PC-9 (cell line): ENCODE measurements at regions of chr15 and their contacts with region 1.

Region 1: GRCh38 chr15:40274350-40275274 is 8.3 kb downstream of the ANKRD63 start:
- DNase-seq: peak; percentile 55 to 83
- H3K4me3 ChIP-seq: no peak overlapping the region
- H3K27ac ChIP-seq: no peak overlapping the region
- H3K4me1 ChIP-seq: no peaks in the 10 kb centered on the region
- H3K27me3 ChIP-seq: no peaks in the 10 kb centered on the region
- CTCF ChIP-seq: peak; percentile 99

Region 2: DNA sequence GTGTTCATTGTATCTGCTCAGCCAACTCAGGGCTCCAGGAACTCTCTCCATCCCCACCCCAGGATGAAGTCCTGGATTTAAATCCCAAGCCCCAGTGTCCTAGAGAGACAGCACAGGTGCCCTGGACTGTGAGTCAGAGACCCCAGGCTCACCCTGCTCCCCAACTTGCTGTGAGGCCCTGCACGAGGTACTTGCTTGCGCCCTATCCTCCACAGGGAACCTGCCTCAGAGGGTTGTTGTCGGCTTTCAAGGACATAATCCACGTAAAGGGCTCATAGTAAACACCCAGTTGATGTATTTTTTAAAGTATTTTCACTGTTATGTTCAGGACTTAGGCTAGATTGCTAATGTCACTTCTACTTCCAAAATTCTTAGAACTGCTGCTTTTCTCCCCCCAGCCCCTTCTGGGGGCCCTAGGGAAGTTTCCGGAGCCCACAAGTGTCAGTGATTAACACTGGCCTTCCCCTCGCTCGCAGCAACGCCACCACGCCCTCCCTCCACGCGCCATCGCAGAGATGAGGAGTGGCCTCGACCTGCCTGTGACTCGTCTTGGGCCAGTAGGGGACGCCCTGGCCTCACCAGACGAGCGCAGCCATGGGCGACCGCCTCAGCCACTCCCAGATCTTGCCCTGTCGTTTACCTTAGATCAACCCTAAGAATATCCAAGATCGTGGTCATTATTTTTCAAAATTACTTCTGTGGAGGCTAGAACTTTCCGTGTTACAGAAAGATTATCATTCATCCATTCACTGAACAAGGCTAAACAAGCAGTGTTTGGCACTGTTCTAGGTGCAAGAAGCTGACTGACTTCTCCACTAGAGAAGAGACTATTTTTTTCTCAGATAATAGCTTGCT is 229.7 kb before region 1 on chr15:
- CTCF ChIA-PET with region 1: no interaction called
- POLR2A ChIA-PET with region 1: no interaction called
- intact Hi-C with region 1: loop called (anchors 1 kb)
- DNase-seq: peak; percentile 59 to 83
- H3K4me3 ChIP-seq: peak overlapping the region; percentile 51
- H3K27ac ChIP-seq: no peak overlapping the region
- H3K4me1 ChIP-seq: peaks cover 50% of the 10 kb centered on the region
- H3K27me3 ChIP-seq: no peaks in the 10 kb centered on the region
- CTCF ChIP-seq: peak; percentile 84

Region 3: GRCh38 chr15:40238532-40239403 is 35.8 kb before region 1 on chr15 and contains the start of gene PAK6:
- CTCF ChIA-PET with region 1: interaction called, 28 read pairs
- POLR2A ChIA-PET with region 1: interaction called, 3 read pairs
- intact Hi-C with region 1: no loop called
- DNase-seq: peak; percentile 77 to 94
- H3K4me3 ChIP-seq: peak within 1 kb of the TSS; percentile 48; the same call in 1 of the 2 replicates
- H3K27ac ChIP-seq: 0 out of 2 replicates have a peak within 1 kb of the TSS, but pooled peaks have one; percentile 19
- H3K4me1 ChIP-seq: peaks cover 51% of the 10 kb centered on the region
- H3K27me3 ChIP-seq: no peaks in the 10 kb centered on the region
- CTCF ChIP-seq: no peak
- total RNA-seq, gene PAK6: 10.7 and 11.7 TPM in 2 replicates

Region 4: GRCh38 chr15:40302981-40303380 is 28.4 kb after region 1 on chr15:
- CTCF ChIA-PET with region 1: no interaction called
- POLR2A ChIA-PET with region 1: no interaction called
- intact Hi-C with region 1: no loop called
- DNase-seq: no peak
- H3K4me3 ChIP-seq: no peak overlapping the region
- H3K27ac ChIP-seq: no peak overlapping the region
- H3K4me1 ChIP-seq: no peaks in the 10 kb centered on the region
- H3K27me3 ChIP-seq: no peaks in the 10 kb centered on the region
- CTCF ChIP-seq: no peak

Region 5: DNA sequence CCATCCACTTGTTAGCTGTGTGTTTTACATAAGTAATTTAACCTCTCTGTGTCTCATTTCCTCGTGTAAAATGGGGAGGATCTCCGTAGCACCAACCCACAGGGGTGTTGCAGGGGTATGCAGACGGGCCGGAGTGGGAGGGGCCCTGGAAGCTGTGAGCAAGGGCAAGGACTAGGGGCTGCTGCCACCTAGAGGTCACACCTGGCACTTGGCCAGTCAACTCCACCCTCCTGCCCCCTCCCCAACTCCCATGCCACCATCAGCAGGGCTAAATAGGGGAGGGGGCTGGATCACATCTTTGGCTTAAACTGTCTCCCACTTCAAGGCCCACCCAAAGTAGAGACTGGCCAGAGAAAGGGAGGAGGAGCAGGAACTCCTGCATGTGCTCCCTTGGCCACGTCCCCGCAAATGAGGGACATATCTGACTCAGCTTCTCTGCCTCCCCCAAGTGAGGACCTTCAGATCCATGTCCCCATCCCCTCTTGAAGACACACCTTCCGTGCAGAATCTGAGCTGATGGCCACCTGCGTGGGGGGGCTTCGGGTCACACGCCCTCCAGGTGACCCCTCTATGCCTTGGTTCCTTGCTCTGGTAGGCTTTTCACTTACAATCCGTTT is 63.5 kb after region 1 on chr15:
- CTCF ChIA-PET with region 1: interaction called, 8 read pairs
- POLR2A ChIA-PET with region 1: no interaction called
- intact Hi-C with region 1: loop called (anchors 2 kb)
- DNase-seq: peak; percentile 63 to 78
- H3K4me3 ChIP-seq: peak overlapping the region; percentile 94
- H3K27ac ChIP-seq: peak overlapping the region; percentile 91
- H3K4me1 ChIP-seq: peaks cover 54% of the 10 kb centered on the region
- H3K27me3 ChIP-seq: no peaks in the 10 kb centered on the region
- CTCF ChIP-seq: peak; percentile 88

Region 6: GRCh38 chr15:40421246-40422157 is 146.9 kb after region 1 on chr15:
- CTCF ChIA-PET with region 1: interaction called, 8 read pairs
- POLR2A ChIA-PET with region 1: no interaction called
- intact Hi-C with region 1: loop called (anchors 1 kb)
- DNase-seq: peak in 1 of 2 experiments; percentile 68
- H3K4me3 ChIP-seq: no peak overlapping the region
- H3K27ac ChIP-seq: peak overlapping the region; percentile 40
- H3K4me1 ChIP-seq: peaks cover 20% of the 10 kb centered on the region
- H3K27me3 ChIP-seq: no peaks in the 10 kb centered on the region
- CTCF ChIP-seq: no peak